PC-3 (cell line): ENCODE measurements at regions of chr19 and their contacts with region 1.

Region 1: DNA sequence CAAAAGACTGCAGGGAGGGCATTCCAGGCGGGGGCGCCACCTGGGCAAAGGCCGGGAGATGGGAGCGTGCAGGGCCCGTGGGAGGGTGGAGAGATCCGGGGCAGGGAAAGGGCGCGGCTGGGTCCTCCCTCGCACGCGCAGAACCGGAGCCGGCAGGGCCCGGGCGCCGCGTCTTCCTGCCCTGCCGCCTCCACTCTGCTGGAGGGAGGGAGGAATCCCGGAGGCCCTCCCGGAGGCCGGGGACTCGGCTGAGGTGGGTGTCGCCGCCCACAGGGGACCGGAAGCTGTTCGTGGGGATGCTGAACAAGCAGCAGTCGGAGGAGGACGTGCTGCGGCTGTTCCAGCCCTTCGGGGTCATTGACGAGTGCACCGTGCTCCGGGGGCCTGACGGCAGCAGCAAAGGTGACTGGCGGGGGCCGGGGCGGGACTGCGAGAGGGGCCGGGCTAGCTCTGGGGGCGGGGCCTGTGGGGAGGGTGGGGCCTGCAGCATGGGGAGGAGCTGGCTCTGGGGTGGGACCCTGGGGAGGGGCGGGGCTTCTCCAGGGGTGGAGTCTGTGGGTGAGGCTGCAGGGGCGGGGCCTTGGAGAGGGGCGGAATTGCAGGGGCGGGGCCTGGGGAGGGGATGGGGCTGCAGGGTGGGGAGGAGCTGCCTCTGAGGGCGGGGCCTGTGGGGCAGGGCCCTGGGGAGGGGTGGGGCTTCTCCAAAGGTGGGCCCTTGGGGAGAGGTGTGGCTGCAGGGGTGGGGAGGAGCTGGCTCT is 51.3 kb downstream of the CELF5 start:
- DNase-seq: peak; percentile 88
- ATAC-seq: peak; percentile 74
- H3K4me3 ChIP-seq: peak overlapping the region; percentile 69
- H3K27ac ChIP-seq: no peak overlapping the region
- H3K4me1 ChIP-seq: 0 out of 2 replicates have a peak, but pooled peaks cover 4% of the 10 kb centered on the region
- H3K27me3 ChIP-seq: no peaks in the 10 kb centered on the region
- CTCF ChIP-seq: peak; percentile 33; the same call in 1 of the 2 replicates

Region 2: DNA sequence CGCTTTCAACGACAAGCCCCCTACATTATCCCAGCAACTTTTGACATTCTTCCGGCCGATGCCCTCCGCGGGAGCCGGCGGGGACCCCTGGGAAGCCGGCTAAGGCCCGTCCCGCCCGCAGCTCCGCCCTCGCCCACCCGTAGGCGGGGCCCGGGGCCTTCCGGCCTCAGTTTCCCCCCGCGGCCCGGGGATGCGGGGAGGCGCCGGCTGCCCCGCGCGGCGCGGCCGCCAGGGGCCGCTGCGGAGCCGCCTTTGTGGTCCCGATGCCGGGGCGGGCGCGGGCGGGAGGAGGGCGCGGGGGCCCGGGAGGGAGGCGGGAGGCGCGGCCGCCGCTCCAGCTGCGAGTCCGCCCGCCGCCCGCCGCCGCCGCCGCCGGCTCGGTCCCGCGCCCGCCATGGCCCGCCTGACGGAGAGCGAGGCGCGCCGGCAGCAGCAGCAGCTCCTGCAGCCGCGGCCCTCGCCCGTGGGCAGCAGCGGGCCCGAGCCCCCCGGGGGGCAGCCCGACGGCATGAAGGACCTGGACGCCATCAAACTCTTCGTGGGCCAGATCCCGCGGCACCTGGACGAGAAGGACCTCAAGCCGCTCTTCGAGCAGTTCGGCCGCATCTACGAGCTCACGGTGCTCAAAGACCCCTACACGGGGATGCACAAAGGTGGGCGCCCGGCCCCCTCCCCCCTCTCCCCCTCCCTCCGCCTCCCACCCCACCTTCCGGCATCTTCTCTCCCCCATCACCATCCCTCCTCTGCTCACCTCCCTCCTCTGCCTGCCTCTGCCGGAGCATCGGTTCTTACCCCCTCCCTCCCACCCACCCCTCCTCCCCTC is 51.2 kb before region 1 on chr19 and contains the start of gene CELF5:
- CTCF ChIA-PET with region 1: interaction called, 10 read pairs
- POLR2A ChIA-PET with region 1: no interaction called
- intact Hi-C with region 1: no loop called
- DNase-seq: peak; percentile 30
- ATAC-seq: peak; percentile 50
- H3K4me3 ChIP-seq: no peak within 1 kb of the TSS
- H3K27ac ChIP-seq: no peak within 1 kb of the TSS
- H3K4me1 ChIP-seq: no peaks in the 10 kb centered on the region
- H3K27me3 ChIP-seq: no peaks in the 10 kb centered on the region; the same call in 1 of the 2 replicates
- CTCF ChIP-seq: no peak; the same call in 1 of the 2 replicates
- total RNA-seq, gene CELF5: 0.44 and 0.75 TPM in 2 replicates

Region 3: GRCh38 chr19:3234800-3235199 is 41.0 kb before region 1 on chr19:
- CTCF ChIA-PET with region 1: interaction called, 10 read pairs
- POLR2A ChIA-PET with region 1: no interaction called
- intact Hi-C with region 1: no loop called
- DNase-seq: no peak
- ATAC-seq: no peak
- H3K4me3 ChIP-seq: no peak overlapping the region
- H3K27ac ChIP-seq: no peak overlapping the region
- H3K4me1 ChIP-seq: no peaks in the 10 kb centered on the region
- H3K27me3 ChIP-seq: no peaks in the 10 kb centered on the region
- CTCF ChIP-seq: peak; percentile 34; the same call in 1 of the 2 replicates